ENCODE measurements at regions of chr12 and their contacts with region 1.

Region 1: GRCh38 chr12:14365294-14366208 is at the start of gene ATF7IP:
- DNase-seq: peak; percentile 99 to 100
- ATAC-seq: peak; percentile 98 to 99
- H3K4me3 ChIP-seq: peak within 1 kb of the TSS; percentile 59
- H3K27ac ChIP-seq: peak within 1 kb of the TSS; percentile 86 to 94
- H3K4me1 ChIP-seq: no peaks in the 10 kb centered on the region
- CTCF ChIP-seq: peak; percentile 54
- EP300 ChIP-seq: no peak
- POLR2A ChIP-seq: peak; percentile 77
- RAD21 ChIP-seq: peak; percentile 46 to 50
- polyA plus RNA-seq, gene ATF7IP: 14.2 and 15.2 TPM in 2 replicates

Region 2: GRCh38 chr12:14257734-14258574 is 107.6 kb before region 1 on chr12:
- CTCF ChIA-PET with region 1: interaction called, 4 read pairs
- POLR2A ChIA-PET with region 1: interaction called, 16 read pairs
- DNase-seq: peak; percentile 59 to 94
- ATAC-seq: peak; percentile 82 to 86
- H3K4me3 ChIP-seq: no peak overlapping the region
- H3K27ac ChIP-seq: peak overlapping the region; percentile 55 to 79
- H3K4me1 ChIP-seq: peaks cover 23% of the 10 kb centered on the region
- CTCF ChIP-seq: no peak
- EP300 ChIP-seq: 0 out of 5 replicates have a peak, but pooled peaks of 1 of the 2 experiments have one; percentile 19
- POLR2A ChIP-seq: no peak
- RAD21 ChIP-seq: no peak

Region 3: DNA sequence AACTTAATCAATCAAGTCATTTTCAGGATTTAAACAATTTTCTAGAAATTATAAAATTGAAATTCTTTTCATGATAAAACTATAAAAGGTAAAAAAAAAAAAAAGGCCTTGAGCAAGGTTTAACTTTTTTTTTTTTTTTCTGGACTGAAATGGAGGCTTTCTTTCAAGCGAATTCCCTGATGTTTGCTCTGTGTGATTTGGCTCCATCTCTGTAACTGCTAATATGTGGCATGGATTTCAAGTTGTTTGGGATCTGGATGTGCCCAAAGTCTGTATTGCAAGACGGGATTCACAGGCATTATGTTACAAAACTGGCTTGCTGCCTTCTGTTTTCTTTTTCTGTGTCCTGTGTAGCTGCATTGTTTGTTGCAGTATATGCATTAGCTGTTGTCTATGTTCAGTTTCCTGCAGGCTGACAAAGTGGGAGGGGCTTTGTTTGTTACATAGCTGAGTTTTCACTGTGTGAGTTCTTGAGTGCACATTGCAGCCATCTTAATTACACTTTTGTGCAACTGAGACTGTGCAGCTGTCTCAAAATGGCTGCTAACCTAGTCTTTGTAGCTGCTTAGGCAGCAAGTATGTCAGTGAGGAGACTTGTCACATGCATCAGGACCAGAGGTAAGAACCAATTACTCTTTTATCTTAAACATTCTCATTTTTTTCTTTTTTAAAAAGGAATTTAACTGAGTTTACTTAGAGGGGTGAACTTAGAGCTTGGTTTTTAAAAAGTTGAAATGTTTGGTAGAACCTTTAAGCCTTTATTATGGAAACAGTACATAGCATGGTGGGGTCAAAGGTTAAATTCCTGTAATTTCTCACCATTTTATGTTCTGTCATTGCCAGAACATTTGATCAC is 19.5 kb after region 1 on chr12:
- CTCF ChIA-PET with region 1: no interaction called
- POLR2A ChIA-PET with region 1: interaction called, 24 read pairs
- DNase-seq: peak; percentile 59 to 91
- ATAC-seq: peak; percentile 94
- H3K4me3 ChIP-seq: peak overlapping the region; percentile 19; the same call in 1 of the 3 replicates
- H3K27ac ChIP-seq: peak overlapping the region; percentile 48 to 55
- H3K4me1 ChIP-seq: peaks cover 12% of the 10 kb centered on the region; the same call in 2 of the 3 replicates
- CTCF ChIP-seq: no peak
- EP300 ChIP-seq: no peak
- POLR2A ChIP-seq: no peak
- RAD21 ChIP-seq: no peak

Region 4: GRCh38 chr12:14993537-14994266 is 628.2 kb after region 1 on chr12:
- CTCF ChIA-PET with region 1: no interaction called
- POLR2A ChIA-PET with region 1: no interaction called
- DNase-seq: peak in 1 of 2 experiments; percentile 12
- ATAC-seq: peak; percentile 80; a peak in 5 of 6 replicates
- H3K4me3 ChIP-seq: no peak overlapping the region
- H3K27ac ChIP-seq: peak overlapping the region in 1 of 2 experiments; percentile 12; a peak in 1 of 6 replicates
- H3K4me1 ChIP-seq: peaks cover 14% of the 10 kb centered on the region; the same call in 1 of the 3 replicates
- CTCF ChIP-seq: no peak
- EP300 ChIP-seq: no peak
- POLR2A ChIP-seq: no peak
- RAD21 ChIP-seq: 0 out of 5 replicates have a peak, but pooled peaks of 1 of the 2 experiments have one; percentile 11